Activated naive CD4-positive, alpha-beta T cell treated with anti-CD3 and anti-CD28 coated beads for 36 hours (primary cell): ENCODE measurements at regions of chr20 and their contacts with region 1.

Region 1: DNA sequence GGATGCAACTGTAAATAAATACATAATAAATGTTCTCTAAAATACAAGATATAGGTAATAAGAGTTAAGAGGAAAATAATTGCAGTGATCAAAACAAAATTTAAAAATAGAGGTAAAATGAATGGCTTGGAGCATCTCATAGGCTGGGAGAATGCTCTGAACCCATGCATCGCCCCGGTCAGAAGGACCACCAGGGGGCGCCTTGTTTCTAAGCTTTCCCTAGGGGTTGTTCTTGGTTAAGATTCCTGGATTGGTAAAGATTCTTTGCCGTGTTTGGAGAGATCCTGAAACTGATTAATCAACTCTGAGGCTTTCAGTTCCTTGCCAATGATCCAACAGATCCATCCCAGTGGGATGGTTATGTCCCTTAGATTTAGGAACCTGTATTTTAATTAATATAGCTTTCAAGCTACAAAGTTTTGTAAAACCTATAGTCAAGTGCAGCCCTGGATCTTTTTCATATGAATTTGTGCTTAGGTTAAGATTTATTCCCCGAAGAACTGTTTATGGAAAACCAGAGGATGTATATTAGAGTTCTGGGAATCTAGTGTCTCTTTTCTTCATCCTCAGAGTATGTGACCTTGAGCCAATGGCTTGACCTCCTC is 45.3 kb upstream of the PRELID3B start:
- DNase-seq: peak; percentile 94
- H3K4me3 Mint-ChIP-seq: no peak overlapping the region
- H3K27ac Mint-ChIP-seq: no peak overlapping the region
- H3K4me1 Mint-ChIP-seq: peaks cover 2% of the 10 kb centered on the region
- H3K27me3 Mint-ChIP-seq: no peaks in the 10 kb centered on the region

Region 2: DNA sequence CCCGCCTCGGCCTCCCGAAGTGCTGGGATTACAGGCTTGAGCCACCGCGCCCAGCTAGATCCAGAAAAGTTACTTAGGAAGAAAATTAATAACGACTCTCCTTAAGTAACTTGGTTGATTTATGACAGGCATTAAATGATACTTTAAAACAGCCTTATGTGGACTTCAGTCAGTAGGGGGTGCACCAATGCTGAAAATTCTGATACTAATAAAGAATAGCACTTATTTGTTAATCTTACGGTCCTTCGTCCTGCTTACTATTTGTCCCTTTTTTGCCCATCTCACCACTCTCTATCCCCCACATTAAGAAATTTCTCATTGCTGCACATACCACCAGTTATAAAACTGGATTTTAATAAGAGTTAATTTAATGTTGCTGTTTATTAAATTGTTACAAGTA is 32.6 kb before region 1 on chr20:
- CTCF ChIA-PET with region 1: no interaction called
- intact Hi-C with region 1: loop called (anchors 1 kb)
- DNase-seq: no peak
- H3K4me3 Mint-ChIP-seq: no peak overlapping the region
- H3K27ac Mint-ChIP-seq: no peak overlapping the region
- H3K4me1 Mint-ChIP-seq: no peaks in the 10 kb centered on the region
- H3K27me3 Mint-ChIP-seq: peaks cover 5% of the 10 kb centered on the region

Region 3: GRCh38 chr20:59120491-59120890 is 32.6 kb after region 1 on chr20:
- CTCF ChIA-PET with region 1: interaction called, 13 read pairs
- intact Hi-C with region 1: no loop called
- DNase-seq: peak; percentile 59
- H3K4me3 Mint-ChIP-seq: no peak overlapping the region
- H3K27ac Mint-ChIP-seq: no peak overlapping the region
- H3K4me1 Mint-ChIP-seq: peaks cover 75% of the 10 kb centered on the region
- H3K27me3 Mint-ChIP-seq: no peaks in the 10 kb centered on the region

Region 4: GRCh38 chr20:59159493-59160376 is 71.8 kb after region 1 on chr20:
- CTCF ChIA-PET with region 1: interaction called, 22 read pairs
- intact Hi-C with region 1: loop called (anchors 2 kb)
- DNase-seq: peak; percentile 87
- H3K4me3 Mint-ChIP-seq: peak overlapping the region; percentile 90
- H3K27ac Mint-ChIP-seq: peak overlapping the region; percentile 94
- H3K4me1 Mint-ChIP-seq: peaks cover 80% of the 10 kb centered on the region
- H3K27me3 Mint-ChIP-seq: no peaks in the 10 kb centered on the region

Region 5: GRCh38 chr20:59403261-59403961 is 315.5 kb after region 1 on chr20:
- CTCF ChIA-PET with region 1: interaction called, 5 read pairs
- intact Hi-C with region 1: loop called (anchors 1 kb)
- DNase-seq: peak; percentile 72
- H3K4me3 Mint-ChIP-seq: no peak overlapping the region
- H3K27ac Mint-ChIP-seq: no peak overlapping the region
- H3K4me1 Mint-ChIP-seq: peaks cover 2% of the 10 kb centered on the region
- H3K27me3 Mint-ChIP-seq: peaks cover 8% of the 10 kb centered on the region